ENCODE measurements at regions of chr17 and their contacts with region 1.

Region 1: DNA sequence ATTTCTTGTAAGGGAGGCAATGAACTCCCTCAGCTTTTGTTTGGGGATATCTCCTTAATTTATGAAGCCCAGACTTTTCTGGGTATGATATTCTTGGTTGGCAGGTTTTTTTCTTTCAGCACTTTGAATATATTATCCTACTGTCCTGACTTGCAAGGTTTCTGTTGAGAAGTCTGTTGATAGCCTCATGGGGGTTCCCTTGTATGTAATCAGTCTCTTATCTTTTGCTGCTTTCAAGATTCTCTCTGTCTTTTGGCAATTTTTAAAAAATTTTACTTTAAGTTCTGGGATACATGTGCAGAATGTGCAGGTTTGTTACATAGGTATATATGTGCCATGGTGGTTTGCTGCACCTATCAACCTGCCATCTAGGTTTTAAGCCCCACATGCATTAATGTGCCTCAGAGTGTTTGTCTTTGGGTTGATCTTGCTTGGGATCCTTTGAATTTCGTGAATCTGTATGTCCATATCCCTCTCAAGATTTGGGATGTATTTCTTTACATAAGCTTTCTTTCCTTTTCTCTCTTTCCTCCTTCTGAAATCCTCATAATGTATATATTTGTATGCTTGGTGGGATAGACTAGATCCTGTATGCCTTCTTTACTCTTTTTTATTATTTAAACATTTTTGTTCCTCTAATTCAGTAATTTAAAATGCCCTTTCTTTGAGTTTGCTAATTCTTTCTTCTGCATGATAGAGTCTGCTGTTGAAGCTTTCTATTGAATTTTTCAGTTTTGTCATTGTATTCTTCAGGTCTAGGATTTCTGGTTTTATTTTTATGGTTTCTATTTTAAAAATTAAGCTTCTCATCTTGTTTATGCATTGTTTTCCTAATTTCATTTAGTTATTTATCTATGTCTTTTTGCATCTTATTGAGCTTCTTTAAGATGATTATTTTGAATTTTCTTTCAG is 5.2 kb upstream of the KRT25 start:
- DNase-seq: no peak
- ATAC-seq: no peak
- H3K4me3 ChIP-seq: no peak overlapping the region
- H3K4me3 Mint-ChIP-seq: no peak overlapping the region
- H3K27ac ChIP-seq: no peak overlapping the region
- H3K27ac Mint-ChIP-seq: no peak overlapping the region
- H3K4me1 ChIP-seq: no peaks in the 10 kb centered on the region
- H3K4me1 Mint-ChIP-seq: no peaks in the 10 kb centered on the region
- H3K27me3 ChIP-seq: peaks cover 0 to 18% (median 11%) of the 10 kb centered on the region in 4 experiments
- H3K27me3 Mint-ChIP-seq: peaks cover 44% of the 10 kb centered on the region
- CTCF ChIP-seq: no peak

Region 2: DNA sequence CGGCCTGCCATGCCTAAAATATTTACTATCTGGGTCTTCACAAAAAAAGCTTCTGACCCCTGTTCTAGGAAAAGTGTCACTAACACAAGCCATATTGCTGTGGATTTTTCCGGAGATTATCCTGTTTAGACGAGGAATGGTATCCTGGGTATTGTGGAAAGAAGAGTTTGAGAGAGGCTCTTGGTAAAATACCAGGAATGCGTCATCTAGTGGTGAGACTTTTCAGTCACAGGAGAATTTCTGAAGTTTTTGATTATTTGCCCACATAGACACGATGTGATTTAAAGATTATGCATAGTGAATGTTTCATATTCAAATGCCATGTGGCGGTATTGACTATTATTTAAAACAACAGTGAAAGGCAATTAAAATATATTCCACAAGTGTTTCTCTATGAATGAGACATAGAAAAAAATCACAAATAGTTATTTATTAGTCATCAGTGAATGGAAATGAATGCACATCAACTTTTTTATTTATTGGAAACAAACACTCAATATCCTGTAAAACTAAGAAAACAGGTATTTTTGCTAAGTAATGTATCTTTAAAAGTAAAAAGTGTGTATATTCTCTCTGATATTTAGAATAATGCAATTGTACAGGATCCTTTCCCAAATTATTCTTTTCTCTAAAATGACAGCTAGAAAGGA is 31.6 kb after region 1 on chr17:
- CTCF ChIA-PET with region 1: no interaction called
- POLR2A ChIA-PET with region 1: no interaction called
- intact Hi-C with region 1: no loop called
- DNase-seq: peak; percentile 25
- ATAC-seq: no peak
- H3K4me3 ChIP-seq: no peak overlapping the region
- H3K4me3 Mint-ChIP-seq: no peak overlapping the region
- H3K27ac ChIP-seq: no peak overlapping the region
- H3K27ac Mint-ChIP-seq: no peak overlapping the region
- H3K4me1 ChIP-seq: no peaks in the 10 kb centered on the region
- H3K4me1 Mint-ChIP-seq: no peaks in the 10 kb centered on the region
- H3K27me3 ChIP-seq: peaks cover 0 to 17% (median 2%) of the 10 kb centered on the region in 4 experiments
- H3K27me3 Mint-ChIP-seq: peaks cover 35% of the 10 kb centered on the region
- CTCF ChIP-seq: peak; percentile 41

Region 3: DNA sequence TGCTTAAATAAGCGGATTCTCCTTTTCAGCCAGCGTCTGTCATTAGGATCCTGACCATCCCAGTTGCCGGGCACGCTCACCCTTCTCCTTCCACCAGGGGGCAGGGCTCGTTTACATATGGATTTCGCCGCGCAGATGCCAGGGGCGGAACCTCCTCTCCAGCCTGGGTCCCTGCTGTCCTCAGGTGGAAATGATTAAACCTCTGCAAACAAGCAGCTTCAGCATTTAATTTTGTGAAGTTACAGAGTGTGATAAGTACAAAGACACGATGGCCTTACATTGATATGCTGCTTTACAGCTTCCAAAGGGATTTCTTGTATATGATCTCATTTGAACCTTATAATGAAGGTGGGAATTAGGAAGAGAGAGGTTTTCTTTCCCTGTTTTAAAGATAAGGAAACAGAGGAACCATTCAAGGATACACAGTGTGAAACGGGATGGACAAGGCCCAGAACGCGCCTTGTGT is 43.3 kb after region 1 on chr17:
- CTCF ChIA-PET with region 1: no interaction called
- POLR2A ChIA-PET with region 1: no interaction called
- intact Hi-C with region 1: loop called (anchors 2 kb)
- DNase-seq: peak; percentile 79
- ATAC-seq: peak; percentile 93
- H3K4me3 ChIP-seq: no peak overlapping the region
- H3K4me3 Mint-ChIP-seq: no peak overlapping the region
- H3K27ac ChIP-seq: no peak overlapping the region
- H3K27ac Mint-ChIP-seq: no peak overlapping the region
- H3K4me1 ChIP-seq: peaks cover 0 to 4% of the 10 kb centered on the region in 2 donors
- H3K4me1 Mint-ChIP-seq: peaks cover 3% of the 10 kb centered on the region
- H3K27me3 ChIP-seq: peaks cover 0 to 47% (median 28%) of the 10 kb centered on the region in 4 experiments
- H3K27me3 Mint-ChIP-seq: peaks cover 48% of the 10 kb centered on the region
- CTCF ChIP-seq: peak; percentile 94

Region 4: GRCh38 chr17:41360296-41360995 is 600.1 kb after region 1 on chr17:
- CTCF ChIA-PET with region 1: no interaction called
- POLR2A ChIA-PET with region 1: no interaction called
- intact Hi-C with region 1: no loop called
- DNase-seq: no peak
- ATAC-seq: no peak
- H3K4me3 ChIP-seq: no peak overlapping the region
- H3K4me3 Mint-ChIP-seq: no peak overlapping the region
- H3K27ac ChIP-seq: no peak overlapping the region
- H3K27ac Mint-ChIP-seq: no peak overlapping the region
- H3K4me1 ChIP-seq: no peaks in the 10 kb centered on the region
- H3K4me1 Mint-ChIP-seq: no peaks in the 10 kb centered on the region
- H3K27me3 ChIP-seq: peaks cover 0 to 12% (median 0%) of the 10 kb centered on the region in 4 experiments
- H3K27me3 Mint-ChIP-seq: peaks cover 38% of the 10 kb centered on the region
- CTCF ChIP-seq: no peak

Measured in B cell (primary cell).